ENCODE measurements at regions of chr11 and their contacts with region 1.

Region 1: GRCh38 chr11:61899146-61899841 is 7.9 kb upstream of the FADS3 start:
- DNase-seq: peak; percentile 78 to 92 (median 89)
- H3K4me3 ChIP-seq: no peak overlapping the region
- H3K27ac ChIP-seq: no peak overlapping the region
- H3K4me1 ChIP-seq: peaks cover 0 to 6% (median 6%) of the 10 kb centered on the region in 3 donors
- H3K27me3 ChIP-seq: no peaks in the 10 kb centered on the region
- CTCF ChIP-seq: peak; percentile 99

Region 2: GRCh38 chr11:61718621-61719302 is 180.5 kb before region 1 on chr11:
- intact Hi-C with region 1: no loop called
- DNase-seq: peak in 4 of 5 donors; percentile 85 to 94 (median 90)
- H3K4me3 ChIP-seq: peak overlapping the region in 1 of 3 donors; percentile 9
- H3K27ac ChIP-seq: no peak overlapping the region
- H3K4me1 ChIP-seq: no peaks in the 10 kb centered on the region
- H3K27me3 ChIP-seq: no peaks in the 10 kb centered on the region
- CTCF ChIP-seq: no peak

Region 3: GRCh38 chr11:62081378-62082291 is 182.3 kb after region 1 on chr11:
- intact Hi-C with region 1: loop called (anchors 5 kb)
- DNase-seq: peak; percentile 82 to 88 (median 85)
- H3K4me3 ChIP-seq: peak overlapping the region in 1 of 3 donors; percentile 24
- H3K27ac ChIP-seq: peak overlapping the region in 1 of 2 donors; percentile 24
- H3K4me1 ChIP-seq: peaks cover 0 to 9% (median 2%) of the 10 kb centered on the region in 3 donors
- H3K27me3 ChIP-seq: no peaks in the 10 kb centered on the region
- CTCF ChIP-seq: peak; percentile 92

Measured in kidney (tissue), 22 donors.